ENCODE measurements at regions of chr14 and their contacts with region 1.

Region 1: DNA sequence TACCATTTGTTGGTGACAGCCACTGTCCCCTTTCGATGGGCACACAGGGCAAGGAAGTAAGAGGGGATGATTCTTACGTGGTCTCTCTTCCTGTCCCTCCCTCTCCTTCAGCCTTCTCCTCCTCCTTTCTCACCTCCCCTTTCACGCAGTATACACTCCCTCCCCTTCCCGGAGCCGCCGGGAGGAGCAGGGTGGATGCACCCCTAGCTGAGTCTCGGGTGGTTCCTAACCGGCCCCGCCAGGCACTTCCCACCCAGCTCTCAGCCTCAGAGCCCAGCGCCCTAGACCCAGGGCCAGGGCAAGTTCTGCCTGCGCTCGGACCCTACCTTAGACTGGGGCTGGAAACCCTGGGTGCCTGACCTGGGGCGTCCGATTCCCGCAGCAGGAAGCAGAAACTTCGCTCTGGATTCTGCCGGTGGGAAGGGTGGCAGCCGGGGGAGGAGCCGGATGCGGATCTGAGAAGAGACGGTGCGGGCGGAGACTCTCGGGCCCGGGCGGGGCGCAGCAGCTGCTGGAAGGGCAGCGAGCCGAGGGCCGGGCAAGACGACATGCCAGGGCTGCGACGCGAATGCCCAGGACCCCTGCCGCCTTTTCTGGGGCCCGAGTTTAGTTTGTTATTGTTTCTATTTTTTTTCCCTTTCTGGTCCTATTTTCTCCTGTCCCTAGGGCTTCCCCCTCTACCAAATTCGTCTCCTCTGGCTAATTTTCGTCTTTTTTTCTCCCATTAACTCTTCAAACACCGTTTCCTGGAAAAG is at the start of gene TEP1:
- DNase-seq: peak; percentile 82
- H3K4me3 Mint-ChIP-seq: peak within 1 kb of the TSS; percentile 85
- H3K27ac Mint-ChIP-seq: peak within 1 kb of the TSS; percentile 89
- H3K4me1 Mint-ChIP-seq: peaks cover 32% of the 10 kb centered on the region
- H3K27me3 Mint-ChIP-seq: no peaks in the 10 kb centered on the region
- total RNA-seq, gene TEP1: 34.3 to 37.0 TPM

Region 2: DNA sequence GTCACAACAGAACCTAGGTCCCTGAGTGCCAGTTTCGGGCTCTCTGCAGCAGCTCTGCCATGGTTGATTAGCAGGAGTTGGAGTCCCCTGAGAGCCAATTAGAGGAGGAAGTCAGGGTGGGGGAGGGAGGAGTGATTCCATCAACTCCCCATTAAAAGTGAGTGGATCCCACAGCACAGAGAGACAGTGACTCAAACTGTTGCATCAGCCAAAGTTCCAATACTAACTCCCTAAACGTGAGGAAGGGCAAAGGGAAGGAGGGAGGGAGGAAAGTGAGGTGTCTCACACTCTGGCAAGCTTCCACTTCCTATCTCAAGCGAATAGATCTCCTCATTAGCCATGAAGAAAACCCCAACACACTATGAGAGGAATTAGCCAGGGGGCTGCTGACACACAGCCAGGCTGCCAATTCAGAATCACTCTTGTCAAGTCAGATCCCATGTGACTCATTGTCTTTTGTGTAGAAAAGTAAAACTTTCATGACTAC is 150.5 kb before region 1 on chr14:
- CTCF ChIA-PET with region 1: no interaction called
- intact Hi-C with region 1: no loop called
- DNase-seq: no peak
- H3K4me3 Mint-ChIP-seq: no peak overlapping the region
- H3K27ac Mint-ChIP-seq: no peak overlapping the region
- H3K4me1 Mint-ChIP-seq: no peaks in the 10 kb centered on the region
- H3K27me3 Mint-ChIP-seq: no peaks in the 10 kb centered on the region

Region 3: GRCh38 chr14:20327005-20327869 is 86.0 kb before region 1 on chr14:
- CTCF ChIA-PET with region 1: interaction called, 10 read pairs
- intact Hi-C with region 1: loop called (anchors 1 kb)
- DNase-seq: peak; percentile 38
- H3K4me3 Mint-ChIP-seq: no peak overlapping the region
- H3K27ac Mint-ChIP-seq: peak overlapping the region; percentile 57
- H3K4me1 Mint-ChIP-seq: peaks cover 45% of the 10 kb centered on the region
- H3K27me3 Mint-ChIP-seq: no peaks in the 10 kb centered on the region

Region 4: GRCh38 chr14:20343092-20343861 is 69.9 kb before region 1 on chr14 and contains the start of gene PARP2:
- CTCF ChIA-PET with region 1: interaction called, 15 read pairs
- intact Hi-C with region 1: loop called (anchors 1 kb)
- DNase-seq: peak; percentile 96
- H3K4me3 Mint-ChIP-seq: peak within 1 kb of the TSS; percentile 96
- H3K27ac Mint-ChIP-seq: peak within 1 kb of the TSS; percentile 95
- H3K4me1 Mint-ChIP-seq: peaks cover 19% of the 10 kb centered on the region
- H3K27me3 Mint-ChIP-seq: peaks cover 2% of the 10 kb centered on the region
- total RNA-seq, gene PARP2: 62.5 to 63.5 TPM

Region 5: DNA sequence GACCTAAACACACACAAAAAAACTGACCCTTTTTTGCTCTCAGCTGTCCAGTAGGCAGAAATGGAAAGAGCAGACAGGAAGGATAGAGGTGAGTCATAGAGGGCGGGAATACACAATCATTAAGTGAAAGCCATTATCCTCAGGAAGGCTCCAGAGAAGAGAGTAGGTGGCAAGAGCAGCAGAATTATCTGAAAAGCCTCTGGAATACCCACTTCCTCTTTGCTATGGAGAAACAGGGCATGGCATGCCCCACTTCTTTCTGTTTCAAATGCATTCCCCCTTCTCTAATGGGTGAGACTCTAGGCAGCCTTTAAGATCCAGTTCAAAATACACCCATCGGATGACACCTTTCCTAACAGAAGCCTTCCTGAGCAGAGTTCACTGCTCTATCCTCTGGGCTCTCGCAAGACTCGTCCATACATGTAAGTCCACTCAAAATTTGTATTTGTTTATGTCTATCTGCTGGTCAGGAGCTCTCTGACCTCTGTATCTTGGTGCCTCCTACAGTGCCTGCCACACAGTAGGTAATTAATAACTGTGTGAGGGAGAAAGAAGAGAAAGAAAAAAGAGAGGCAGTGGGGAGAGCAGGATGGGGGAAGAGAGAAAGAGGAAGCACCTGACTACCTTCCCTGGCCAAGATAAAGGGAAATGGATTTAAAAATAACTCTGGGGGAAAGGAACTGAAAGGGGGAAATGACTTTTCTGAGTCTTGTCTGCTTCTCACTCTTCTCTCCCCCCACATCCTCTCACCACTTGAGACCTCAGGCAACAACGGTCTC is 14.2 kb after region 1 on chr14:
- CTCF ChIA-PET with region 1: interaction called, 18 read pairs
- intact Hi-C with region 1: loop called (anchors 1 kb)
- DNase-seq: peak; percentile 18
- H3K4me3 Mint-ChIP-seq: peak overlapping the region; percentile 0
- H3K27ac Mint-ChIP-seq: peak overlapping the region; percentile 79
- H3K4me1 Mint-ChIP-seq: peaks cover 24% of the 10 kb centered on the region
- H3K27me3 Mint-ChIP-seq: no peaks in the 10 kb centered on the region

Region 6: DNA sequence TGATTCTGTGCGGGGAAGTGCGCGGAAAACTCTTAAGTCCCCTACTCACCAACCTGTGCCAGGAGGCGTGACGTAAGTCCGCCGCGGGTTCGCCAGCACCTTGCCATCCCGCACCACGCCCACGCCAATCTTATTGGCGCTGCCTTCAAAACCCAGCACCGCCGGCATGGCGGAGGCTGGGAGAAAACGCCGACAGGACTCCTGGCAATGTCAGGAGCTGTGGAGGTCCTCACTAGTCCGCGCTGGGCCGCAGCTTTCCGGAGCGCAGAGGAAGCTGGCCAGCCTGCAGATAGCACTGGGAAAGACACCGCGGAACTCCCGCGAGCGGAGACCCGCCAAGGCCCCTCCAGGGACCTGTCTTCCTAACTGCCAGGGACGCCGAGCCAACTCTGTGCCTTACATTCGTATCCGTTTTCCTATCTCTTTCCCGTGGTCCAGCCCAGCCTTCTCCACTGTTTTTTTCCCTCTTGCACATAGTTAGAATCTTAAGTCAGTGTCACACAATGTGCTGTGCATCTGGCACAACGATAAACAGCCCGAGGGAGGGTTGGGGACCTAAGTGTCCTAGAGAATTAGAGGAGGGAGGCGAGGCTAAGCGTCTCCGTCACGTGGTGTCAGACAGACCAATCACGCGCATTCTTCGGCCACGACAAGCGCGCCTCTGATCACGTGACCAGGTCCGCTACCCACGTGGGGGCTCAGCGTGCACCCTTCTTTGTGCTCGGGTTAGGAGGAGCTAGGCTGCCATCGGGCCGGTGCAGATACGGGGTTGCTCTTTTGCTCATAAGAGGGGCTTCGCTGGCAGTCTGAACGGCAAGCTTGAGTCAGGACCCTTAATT is 41.5 kb after region 1 on chr14 and contains the starts of genes APEX1 and OSGEP:
- CTCF ChIA-PET with region 1: interaction called, 33 read pairs
- intact Hi-C with region 1: loop called (anchors 1 kb)
- DNase-seq: peak; percentile 99
- H3K4me3 Mint-ChIP-seq: peak within 1 kb of the TSS; percentile 52
- H3K27ac Mint-ChIP-seq: no peak within 1 kb of the TSS
- H3K4me1 Mint-ChIP-seq: peaks cover 31% of the 10 kb centered on the region
- H3K27me3 Mint-ChIP-seq: no peaks in the 10 kb centered on the region
- total RNA-seq, gene APEX1: 187 to 190 TPM
- total RNA-seq, gene OSGEP: 35.7 to 36.8 TPM

Region 7: GRCh38 chr14:20469242-20469889 is 56.1 kb after region 1 on chr14 and contains the start of gene PNP:
- CTCF ChIA-PET with region 1: interaction called, 6 read pairs
- intact Hi-C with region 1: loop called (anchors 1 kb)
- DNase-seq: peak; percentile 91
- H3K4me3 Mint-ChIP-seq: peak within 1 kb of the TSS; percentile 88
- H3K27ac Mint-ChIP-seq: peak within 1 kb of the TSS; percentile 97
- H3K4me1 Mint-ChIP-seq: peaks cover 36% of the 10 kb centered on the region
- H3K27me3 Mint-ChIP-seq: no peaks in the 10 kb centered on the region
- total RNA-seq, gene PNP: 187 to 191 TPM

Region 8: GRCh38 chr14:20682435-20683124 is 269.4 kb after region 1 on chr14:
- CTCF ChIA-PET with region 1: no interaction called
- intact Hi-C with region 1: loop called (anchors 1 kb)
- DNase-seq: peak; percentile 81
- H3K4me3 Mint-ChIP-seq: no peak overlapping the region
- H3K27ac Mint-ChIP-seq: no peak overlapping the region
- H3K4me1 Mint-ChIP-seq: peaks cover 22% of the 10 kb centered on the region
- H3K27me3 Mint-ChIP-seq: no peaks in the 10 kb centered on the region

Region 9: GRCh38 chr14:20855652-20856291 is 442.6 kb after region 1 on chr14:
- CTCF ChIA-PET with region 1: no interaction called
- intact Hi-C with region 1: no loop called
- DNase-seq: peak; percentile 62
- H3K4me3 Mint-ChIP-seq: no peak overlapping the region
- H3K27ac Mint-ChIP-seq: no peak overlapping the region
- H3K4me1 Mint-ChIP-seq: no peaks in the 10 kb centered on the region
- H3K27me3 Mint-ChIP-seq: no peaks in the 10 kb centered on the region

Measured in activated naive CD4-positive, alpha-beta T cell treated with anti-CD3 and anti-CD28 coated beads for 36 hours (primary cell).